ENCODE measurements at regions of chr2 and their contacts with region 1.

Region 1: DNA sequence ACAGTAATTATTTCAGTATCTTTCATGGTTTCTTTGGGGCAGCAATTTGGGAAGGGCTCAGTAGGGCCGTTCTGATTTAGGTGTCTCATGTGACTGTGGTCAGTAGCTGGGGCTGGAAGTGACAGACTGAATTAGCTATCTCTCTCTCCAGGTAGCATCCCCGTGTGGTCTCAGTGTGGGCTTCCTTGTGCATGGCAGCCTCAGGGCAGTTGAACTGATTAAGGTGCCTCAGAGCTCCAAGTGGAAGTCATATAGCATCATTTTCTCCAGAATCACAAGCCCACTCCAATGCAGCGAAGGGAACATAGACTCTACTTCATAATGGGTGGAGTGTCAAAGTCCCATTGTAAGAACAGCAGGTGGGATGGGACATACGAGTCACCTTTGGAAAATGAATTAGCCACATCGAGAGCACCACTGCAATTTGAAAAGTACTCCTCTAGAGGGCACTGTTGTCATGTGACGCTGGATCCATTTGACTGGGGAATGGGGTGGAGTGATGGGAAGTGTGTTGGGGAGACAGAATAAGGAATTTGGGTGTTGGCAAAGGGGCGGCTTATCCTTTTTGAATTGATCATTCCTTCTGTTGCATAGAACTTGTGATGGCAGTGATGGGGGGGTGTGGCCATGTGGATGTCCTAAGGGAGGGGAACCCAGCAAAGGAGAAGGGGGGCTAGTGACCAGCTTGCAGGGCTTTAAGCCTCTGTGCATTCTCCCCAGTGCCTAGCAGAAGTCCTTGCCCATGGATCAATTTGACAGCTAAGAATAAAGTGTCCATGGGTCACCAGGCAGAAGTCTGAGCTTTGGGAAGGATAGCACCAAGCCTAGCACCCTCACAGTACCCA is 39.3 kb upstream of the FAM136A start:
- DNase-seq: peak; percentile 62
- ATAC-seq: peak; percentile 88
- H3K4me3 ChIP-seq: no peak overlapping the region
- H3K27ac ChIP-seq: no peak overlapping the region
- H3K4me1 ChIP-seq: no peaks in the 10 kb centered on the region
- H3K27me3 ChIP-seq: peaks cover 0 to 25% of the 10 kb centered on the region in 2 experiments; a peak in 1 of 5 replicates
- CTCF ChIP-seq: peak; percentile 98
- EP300 ChIP-seq: no peak
- POLR2A ChIP-seq: no peak
- RAD21 ChIP-seq: peak; percentile 92

Region 2: DNA sequence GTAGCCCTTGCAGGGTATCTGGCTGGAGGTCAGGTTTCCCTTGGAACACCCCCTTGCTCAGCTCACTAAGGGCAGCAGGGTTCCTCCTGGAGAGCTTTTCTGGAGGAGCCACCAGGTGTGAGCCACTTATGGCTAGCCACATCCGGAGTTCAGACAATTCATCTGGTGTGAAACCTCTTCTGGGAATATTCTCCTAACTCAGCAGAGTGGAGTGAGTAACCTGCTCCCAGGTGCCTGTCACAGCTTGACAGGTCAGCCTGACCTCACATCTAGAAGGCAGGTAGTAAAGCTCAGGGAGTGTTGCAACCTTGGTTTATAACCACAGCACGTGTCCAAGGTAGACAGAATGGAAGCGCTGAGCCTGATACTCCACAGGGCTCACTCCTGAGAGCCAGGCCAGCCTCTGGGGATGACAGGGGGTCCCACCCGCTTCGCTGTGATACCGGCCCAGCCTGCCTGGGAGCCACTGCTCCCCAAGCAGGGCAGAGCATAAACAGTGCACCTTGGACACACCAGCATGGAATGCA is 275.1 kb after region 1 on chr2:
- CTCF ChIA-PET with region 1: interaction called, 66 read pairs
- POLR2A ChIA-PET with region 1: interaction called, 5 read pairs
- in situ Hi-C with region 1: loop called (anchors 5 kb)
- intact Hi-C with region 1: loop called (anchors 1 kb)
- DNase-seq: no peak
- ATAC-seq: no peak; the same call in 2 of the 3 replicates
- H3K4me3 ChIP-seq: no peak overlapping the region
- H3K27ac ChIP-seq: no peak overlapping the region
- H3K4me1 ChIP-seq: no peaks in the 10 kb centered on the region
- H3K27me3 ChIP-seq: peaks cover 0 to 37% of the 10 kb centered on the region in 2 experiments; a peak in 3 of 5 replicates
- CTCF ChIP-seq: no peak
- EP300 ChIP-seq: no peak
- POLR2A ChIP-seq: no peak
- RAD21 ChIP-seq: no peak

Region 3: GRCh38 chr2:70647873-70648481 is 306.8 kb after region 1 on chr2:
- CTCF ChIA-PET with region 1: interaction called, 36 read pairs
- POLR2A ChIA-PET with region 1: no interaction called
- in situ Hi-C with region 1: loop called (anchors 5 kb)
- intact Hi-C with region 1: loop called (anchors 1 kb)
- DNase-seq: peak; percentile 43
- ATAC-seq: peak; percentile 80
- H3K4me3 ChIP-seq: no peak overlapping the region
- H3K27ac ChIP-seq: no peak overlapping the region
- H3K4me1 ChIP-seq: no peaks in the 10 kb centered on the region
- H3K27me3 ChIP-seq: no peaks in the 10 kb centered on the region; a peak in 1 of 5 replicates
- CTCF ChIP-seq: peak; percentile 97
- EP300 ChIP-seq: no peak
- POLR2A ChIP-seq: no peak
- RAD21 ChIP-seq: peak; percentile 89

Measured in HepG2 (cell line).